ENCODE measurements at regions of chr11 and their contacts with region 1.

Region 1: DNA sequence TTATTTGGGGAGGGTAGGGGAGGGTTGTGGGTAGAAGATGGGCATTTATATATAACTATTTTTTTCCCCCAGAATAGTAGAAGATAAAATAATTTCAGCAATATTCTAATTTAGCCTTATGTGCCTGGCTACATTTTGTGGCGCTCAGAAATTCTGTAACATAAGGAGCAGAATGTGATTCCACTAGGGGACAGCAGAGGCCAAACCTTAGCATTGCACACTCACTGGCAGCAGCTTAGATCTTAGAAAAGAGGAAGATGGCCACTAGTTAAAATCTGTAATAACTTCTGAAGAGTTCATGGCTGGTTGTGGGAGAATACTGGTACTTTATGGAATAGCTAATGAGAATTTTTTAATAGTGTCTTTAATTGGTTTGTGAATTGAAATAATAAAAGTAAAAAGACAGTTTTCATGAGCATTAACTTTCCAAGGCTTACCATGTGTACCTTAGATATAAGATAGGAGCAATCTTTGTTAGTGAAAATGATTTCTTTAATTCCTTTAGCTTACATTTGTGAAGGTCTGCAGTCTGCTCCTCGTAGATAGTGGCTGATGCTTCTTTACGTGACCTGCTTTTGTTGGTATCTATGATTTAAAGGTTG is 33.1 kb downstream of the DDX10 start:
- DNase-seq: peak; percentile 59
- H3K4me3 ChIP-seq: peak overlapping the region in 1 of 2 experiments; percentile 20; a peak in 1 of 4 replicates
- H3K27ac ChIP-seq: no peak overlapping the region
- H3K4me1 ChIP-seq: peaks cover 0 to 7% of the 10 kb centered on the region in 2 experiments; a peak in 1 of 4 replicates
- H3K27me3 ChIP-seq: no peaks in the 10 kb centered on the region
- CTCF ChIP-seq: peak; percentile 99
- EP300 ChIP-seq: 0 out of 4 replicates have a peak, but pooled peaks of 1 of the 2 experiments have one; percentile 18
- RAD21 ChIP-seq: peak; percentile 95

Region 2: GRCh38 chr11:108724974-108725689 is 27.2 kb after region 1 on chr11:
- CTCF ChIA-PET with region 1: interaction called, 10 read pairs
- POLR2A ChIA-PET with region 1: no interaction called
- DNase-seq: no peak
- H3K4me3 ChIP-seq: no peak overlapping the region
- H3K27ac ChIP-seq: no peak overlapping the region
- H3K4me1 ChIP-seq: peaks cover 0 to 3% of the 10 kb centered on the region in 2 experiments; a peak in 2 of 4 replicates
- H3K27me3 ChIP-seq: no peaks in the 10 kb centered on the region
- CTCF ChIP-seq: no peak
- EP300 ChIP-seq: no peak
- RAD21 ChIP-seq: no peak

Region 3: DNA sequence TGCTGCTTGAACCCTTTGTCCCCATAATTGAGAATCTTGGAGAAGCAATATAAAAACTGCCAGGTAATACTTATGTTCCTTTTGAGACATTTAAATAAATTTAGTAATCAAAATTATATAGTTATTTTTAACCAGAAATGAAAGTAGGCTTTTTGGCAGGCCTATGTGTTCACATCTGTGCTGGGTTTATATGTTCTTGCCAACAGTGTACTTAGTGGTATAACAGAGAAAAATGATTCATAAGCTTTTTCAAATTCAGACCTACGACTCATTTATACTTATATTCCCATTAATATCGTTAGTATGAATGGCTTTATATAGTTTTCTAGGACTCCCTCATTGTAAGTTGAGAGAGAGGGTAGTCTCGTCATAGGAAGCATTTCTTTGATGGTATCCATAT is 45.9 kb after region 1 on chr11:
- CTCF ChIA-PET with region 1: no interaction called
- POLR2A ChIA-PET with region 1: no interaction called
- DNase-seq: no peak
- H3K4me3 ChIP-seq: no peak overlapping the region
- H3K27ac ChIP-seq: no peak overlapping the region
- H3K4me1 ChIP-seq: no peaks in the 10 kb centered on the region
- H3K27me3 ChIP-seq: no peaks in the 10 kb centered on the region
- CTCF ChIP-seq: no peak
- EP300 ChIP-seq: no peak
- RAD21 ChIP-seq: no peak

Region 4: DNA sequence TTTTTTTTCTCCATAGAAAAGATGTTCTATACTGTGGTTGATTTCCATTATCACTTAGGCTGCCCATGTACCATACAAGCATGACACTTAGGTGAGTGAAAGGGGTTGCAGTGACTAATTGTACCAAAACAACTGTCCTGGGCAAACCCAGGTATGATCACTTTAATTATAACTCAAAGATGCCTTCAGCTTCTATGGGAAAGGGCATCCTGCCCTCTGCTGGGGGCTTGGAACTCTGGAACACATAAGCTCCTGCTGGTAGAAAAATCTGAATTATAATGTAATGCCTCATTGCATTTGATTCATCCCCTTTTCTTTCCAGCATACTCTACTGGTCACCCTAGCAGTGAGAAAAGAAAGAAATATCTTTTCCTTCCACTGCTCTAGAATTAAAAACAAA is 173.2 kb after region 1 on chr11:
- CTCF ChIA-PET with region 1: interaction called, 14 read pairs
- POLR2A ChIA-PET with region 1: no interaction called
- DNase-seq: peak; percentile 11
- H3K4me3 ChIP-seq: no peak overlapping the region
- H3K27ac ChIP-seq: peak overlapping the region; percentile 81 to 97; a peak in 3 of 4 replicates
- H3K4me1 ChIP-seq: peaks cover 0 to 70% of the 10 kb centered on the region in 2 experiments; a peak in 3 of 4 replicates
- H3K27me3 ChIP-seq: no peaks in the 10 kb centered on the region
- CTCF ChIP-seq: peak; percentile 80
- EP300 ChIP-seq: no peak
- RAD21 ChIP-seq: peak; percentile 69

Region 5: DNA sequence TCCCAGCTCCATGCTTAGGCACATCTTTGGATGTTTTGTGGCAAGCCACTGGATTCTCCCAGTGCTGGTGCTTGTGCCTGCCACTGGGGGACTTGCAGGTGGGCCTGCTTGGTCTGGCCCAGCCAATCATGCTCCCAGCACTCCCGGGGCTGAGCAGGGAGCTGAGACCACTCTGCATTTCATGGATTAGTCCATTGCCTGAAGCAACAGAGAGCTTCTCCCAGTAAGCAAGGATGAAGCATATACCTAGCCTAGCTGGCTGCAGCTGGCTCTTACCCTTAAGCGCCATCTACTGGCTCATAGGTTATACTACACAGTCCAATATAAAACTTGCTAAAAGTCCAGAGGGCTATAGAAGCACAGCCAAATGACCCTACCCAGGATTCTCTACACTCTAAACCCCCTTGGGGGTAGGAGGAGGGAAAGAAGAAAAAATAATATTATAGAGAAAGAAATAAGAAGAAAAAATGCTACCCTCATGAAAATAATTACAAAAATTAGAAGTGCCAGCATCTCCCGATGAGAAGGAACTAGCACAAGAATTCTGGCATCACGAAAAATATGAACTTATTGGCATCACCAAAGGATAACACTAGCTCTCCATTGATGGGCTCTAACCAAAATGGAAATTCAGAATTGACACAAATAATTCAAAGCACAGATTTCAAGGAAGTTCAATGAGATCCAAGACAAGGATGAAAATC is 999.3 kb after region 1 on chr11:
- CTCF ChIA-PET with region 1: interaction called, 18 read pairs
- POLR2A ChIA-PET with region 1: no interaction called
- DNase-seq: peak; percentile 35
- H3K4me3 ChIP-seq: no peak overlapping the region
- H3K27ac ChIP-seq: no peak overlapping the region
- H3K4me1 ChIP-seq: no peaks in the 10 kb centered on the region
- H3K27me3 ChIP-seq: no peaks in the 10 kb centered on the region
- CTCF ChIP-seq: peak; percentile 67
- EP300 ChIP-seq: no peak
- RAD21 ChIP-seq: peak; percentile 93

Region 6: DNA sequence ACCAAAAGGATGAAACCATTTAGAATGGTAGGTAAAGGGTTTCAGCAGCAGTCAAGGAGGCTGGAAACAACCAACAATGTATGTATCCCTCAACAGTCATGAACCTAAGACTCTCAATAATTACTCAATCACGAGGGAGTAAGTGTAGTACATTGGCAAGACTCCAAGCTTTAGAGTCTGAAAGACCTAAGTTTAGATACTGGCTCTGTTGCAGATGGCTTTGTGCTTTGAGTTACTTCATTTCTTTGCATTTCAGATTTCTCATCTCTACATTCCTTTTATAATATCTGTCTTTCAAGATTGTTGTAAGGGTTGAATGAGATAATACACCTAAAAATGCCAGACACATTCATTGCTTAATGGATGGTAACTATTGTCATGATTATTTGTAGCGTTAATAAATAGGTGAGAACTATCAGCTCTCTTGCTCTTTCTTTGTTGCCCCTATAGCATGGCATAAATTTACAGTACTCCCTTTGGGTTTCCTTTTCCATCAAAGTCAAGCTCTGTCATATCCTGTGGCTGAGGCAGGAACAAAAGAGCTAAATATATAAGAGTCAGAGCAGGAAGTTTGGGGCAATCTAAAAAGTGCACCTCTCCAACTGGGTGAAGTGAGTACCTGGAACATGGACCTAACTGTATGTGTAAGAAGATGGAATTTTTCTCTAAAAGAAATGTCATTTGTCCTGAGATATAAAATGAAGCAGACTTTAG is 1167.0 kb after region 1 on chr11:
- CTCF ChIA-PET with region 1: interaction called, 10 read pairs
- POLR2A ChIA-PET with region 1: no interaction called
- DNase-seq: no peak
- H3K4me3 ChIP-seq: no peak overlapping the region
- H3K27ac ChIP-seq: no peak overlapping the region
- H3K4me1 ChIP-seq: peaks cover 0 to 11% of the 10 kb centered on the region in 2 experiments; a peak in 1 of 4 replicates
- H3K27me3 ChIP-seq: no peaks in the 10 kb centered on the region
- CTCF ChIP-seq: no peak
- EP300 ChIP-seq: no peak
- RAD21 ChIP-seq: no peak

Region 7: GRCh38 chr11:109939166-109939810 is 1241.3 kb after region 1 on chr11:
- CTCF ChIA-PET with region 1: interaction called, 13 read pairs
- POLR2A ChIA-PET with region 1: no interaction called
- DNase-seq: peak; percentile 50
- H3K4me3 ChIP-seq: peak overlapping the region in 1 of 2 experiments; percentile 16; a peak in 1 of 4 replicates
- H3K27ac ChIP-seq: no peak overlapping the region
- H3K4me1 ChIP-seq: no peaks in the 10 kb centered on the region
- H3K27me3 ChIP-seq: no peaks in the 10 kb centered on the region
- CTCF ChIP-seq: peak; percentile 78
- EP300 ChIP-seq: no peak
- RAD21 ChIP-seq: peak; percentile 93

Measured in SK-N-SH (cell line).